Endothelial cell of umbilical vein (primary cell): ENCODE measurements at regions of chr5 and their contacts with region 1.

Region 1: DNA sequence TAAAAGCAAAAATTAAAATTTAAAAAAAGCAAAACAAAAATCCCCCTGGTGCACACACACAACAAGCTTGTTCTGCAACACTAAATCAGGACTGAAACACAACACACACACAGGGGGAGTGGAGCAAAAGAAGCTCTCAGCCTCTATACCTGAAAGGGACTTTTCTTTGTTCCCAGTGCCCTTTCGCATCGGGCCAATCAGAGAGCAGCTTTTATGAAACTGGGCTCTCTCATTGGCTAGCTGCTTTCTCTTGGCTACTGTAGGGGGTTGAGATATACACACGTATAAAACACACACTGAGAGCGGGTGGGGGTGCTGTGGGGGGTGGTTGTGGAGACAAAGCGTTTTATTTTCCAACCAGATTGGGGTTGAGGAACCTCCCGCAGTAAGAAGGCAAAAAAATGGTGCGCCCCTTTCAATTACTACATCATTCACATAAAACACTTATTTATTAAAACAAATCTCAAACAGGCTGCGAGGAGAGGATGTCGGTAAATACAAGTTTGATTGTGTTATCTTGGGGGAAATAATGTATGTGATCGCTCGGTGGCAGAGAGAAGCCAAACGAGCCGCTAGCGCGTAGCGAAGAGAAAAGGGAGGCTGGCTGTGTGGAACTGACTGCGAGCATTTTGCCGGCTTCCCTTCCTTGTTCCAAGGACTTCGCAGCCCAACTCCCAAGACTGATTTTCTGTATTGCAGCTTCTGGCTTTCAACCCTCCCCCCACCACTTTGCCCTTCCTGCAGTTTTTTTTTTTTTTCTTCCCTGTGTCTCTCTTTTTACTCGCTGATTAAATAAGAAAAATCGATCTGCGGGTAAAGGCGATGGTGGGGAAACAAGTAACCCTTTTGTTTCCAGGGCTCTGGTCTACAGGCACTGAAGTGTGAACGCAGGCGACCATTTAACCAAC is 2.5 kb upstream of the ZNF608 start:
- DNase-seq: peak; percentile 97
- H3K4me3 ChIP-seq: peak overlapping the region; percentile 65 to 89 (median 88)
- H3K27ac ChIP-seq: peak overlapping the region; percentile 98
- H3K4me1 ChIP-seq: peaks cover 20% of the 10 kb centered on the region
- H3K27me3 ChIP-seq: no peaks in the 10 kb centered on the region
- CTCF ChIP-seq: no peak
- POLR2A ChIP-seq: no peak

Region 2: DNA sequence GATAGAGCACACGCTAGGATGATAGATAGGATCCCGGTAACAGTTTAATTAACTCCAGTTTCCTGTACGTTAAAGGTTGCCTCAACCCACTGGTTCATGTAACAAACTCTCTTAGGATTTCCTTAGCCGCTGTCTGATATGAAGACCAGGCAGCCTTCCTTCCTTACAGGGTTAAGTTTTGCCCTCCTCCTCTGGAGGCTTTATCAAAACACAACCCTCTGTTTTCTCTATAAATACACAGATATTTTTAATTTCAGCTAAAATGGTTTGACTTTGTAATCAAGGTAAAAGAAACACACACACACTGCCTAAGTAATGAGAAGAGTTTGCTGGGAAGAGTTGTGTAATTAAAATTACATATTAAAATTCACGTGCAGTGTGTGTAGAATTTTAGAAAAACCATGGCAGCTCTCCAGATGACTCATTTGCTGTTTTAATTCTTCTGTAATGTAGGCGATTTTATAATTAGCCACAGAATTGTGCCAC is 867.1 kb before region 1 on chr5:
- CTCF ChIA-PET with region 1: no interaction called
- POLR2A ChIA-PET with region 1: no interaction called
- dilution Hi-C with region 1: no loop called
- intact Hi-C with region 1: loop called (anchors 2 kb)
- DNase-seq: peak; percentile 90
- H3K4me3 ChIP-seq: peak overlapping the region in 1 of 3 experiments; percentile 58
- H3K27ac ChIP-seq: peak overlapping the region; percentile 48
- H3K4me1 ChIP-seq: peaks cover 27% of the 10 kb centered on the region
- H3K27me3 ChIP-seq: peaks cover 3 to 7% of the 10 kb centered on the region in 2 experiments
- CTCF ChIP-seq: no peak
- POLR2A ChIP-seq: no peak

Region 3: DNA sequence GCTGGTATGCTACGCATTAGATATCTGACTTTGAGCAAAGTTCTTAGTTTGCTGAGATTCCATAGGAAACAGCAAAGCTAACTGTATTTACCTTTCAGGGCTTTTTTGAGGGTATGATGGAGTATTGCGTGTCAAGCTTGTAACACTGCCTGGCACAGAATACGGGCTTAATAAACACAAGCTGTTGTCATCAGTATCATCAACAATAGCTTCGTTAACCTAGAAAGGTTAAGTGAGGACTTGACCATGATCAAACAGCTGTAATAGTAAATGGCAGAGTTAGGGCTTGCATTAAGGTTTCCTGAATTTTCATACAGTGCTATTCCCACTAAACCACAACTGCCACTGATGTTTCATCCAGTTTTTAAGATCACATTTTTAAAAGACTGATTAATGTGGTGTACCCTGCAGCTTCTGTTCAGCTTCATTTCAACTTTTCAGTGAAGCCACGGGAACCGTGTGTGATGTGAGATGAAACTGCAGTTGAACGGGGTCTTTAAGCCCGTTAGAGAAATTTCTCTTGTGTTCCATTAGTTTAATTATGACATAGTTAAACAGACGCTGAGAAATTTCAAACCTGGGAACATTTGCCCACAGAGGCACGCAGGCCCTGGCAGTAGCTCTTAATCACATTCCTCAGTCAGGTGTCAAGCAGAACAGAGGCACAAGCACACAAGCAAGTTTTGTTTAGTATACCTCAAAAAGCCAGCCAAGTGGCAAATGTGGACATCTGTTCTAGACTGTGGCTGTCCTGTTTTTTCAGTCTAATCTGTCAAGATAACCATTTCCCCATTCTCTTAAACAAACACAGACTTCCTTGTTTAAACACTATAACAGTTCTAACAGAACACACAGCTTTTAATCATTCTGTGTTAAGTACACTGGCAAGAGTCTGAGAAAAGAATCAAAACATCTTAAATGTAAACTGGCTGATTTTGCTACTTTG is 149.6 kb before region 1 on chr5:
- CTCF ChIA-PET with region 1: interaction called, 10 read pairs
- POLR2A ChIA-PET with region 1: interaction called, 4 read pairs
- dilution Hi-C with region 1: no loop called
- intact Hi-C with region 1: loop called (anchors 1 kb)
- DNase-seq: peak; percentile 98
- H3K4me3 ChIP-seq: peak overlapping the region in 1 of 3 experiments; percentile 41
- H3K27ac ChIP-seq: peak overlapping the region; percentile 99
- H3K4me1 ChIP-seq: peaks cover 63% of the 10 kb centered on the region
- H3K27me3 ChIP-seq: no peaks in the 10 kb centered on the region
- CTCF ChIP-seq: no peak
- POLR2A ChIP-seq: peak; percentile 78

Region 4: DNA sequence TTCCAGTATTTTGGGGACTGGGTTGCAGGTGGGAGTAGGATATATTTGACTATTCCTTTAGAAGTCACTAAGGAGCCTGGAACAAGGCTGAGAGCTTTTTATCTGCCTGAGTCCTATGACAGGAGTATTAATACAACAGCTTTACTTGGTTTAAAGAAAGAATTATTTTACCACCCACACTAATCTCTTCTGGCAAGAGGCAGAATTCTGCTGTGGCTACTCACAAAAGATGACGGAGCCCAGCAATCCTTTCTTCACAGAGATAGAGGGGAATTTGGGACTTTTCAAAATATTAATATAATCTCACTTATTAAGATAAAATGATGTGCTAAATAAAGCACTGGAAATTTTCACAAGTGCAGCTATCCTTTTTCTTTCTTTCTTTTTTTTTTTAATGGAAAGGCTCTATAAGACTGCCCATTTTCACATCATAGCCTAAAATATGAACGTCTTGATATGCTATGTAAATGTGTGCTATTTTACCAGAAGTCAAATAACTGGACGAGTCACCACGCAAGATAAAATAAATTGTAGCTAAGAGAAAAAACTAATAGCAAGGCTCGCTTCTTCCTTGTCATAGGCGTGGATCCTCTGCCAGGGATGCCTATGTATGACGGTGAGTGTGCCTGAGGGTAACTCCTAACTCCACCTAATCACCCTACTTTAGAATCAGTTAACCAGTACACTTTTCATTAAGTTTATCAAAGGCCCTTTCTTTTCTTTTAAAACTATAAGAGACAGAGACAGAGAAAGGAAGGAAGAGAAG is 78.8 kb before region 1 on chr5:
- CTCF ChIA-PET with region 1: no interaction called
- POLR2A ChIA-PET with region 1: no interaction called
- dilution Hi-C with region 1: no loop called
- intact Hi-C with region 1: no loop called
- DNase-seq: no peak
- H3K4me3 ChIP-seq: no peak overlapping the region
- H3K27ac ChIP-seq: no peak overlapping the region
- H3K4me1 ChIP-seq: no peaks in the 10 kb centered on the region
- H3K27me3 ChIP-seq: no peaks in the 10 kb centered on the region
- CTCF ChIP-seq: no peak
- POLR2A ChIP-seq: no peak

Region 5: GRCh38 chr5:124888050-124888506 is 139.1 kb after region 1 on chr5:
- CTCF ChIA-PET with region 1: interaction called, 3 read pairs
- POLR2A ChIA-PET with region 1: interaction called, 3 read pairs
- dilution Hi-C with region 1: no loop called
- intact Hi-C with region 1: loop called (anchors 5 kb)
- DNase-seq: no peak
- H3K4me3 ChIP-seq: no peak overlapping the region
- H3K27ac ChIP-seq: no peak overlapping the region
- H3K4me1 ChIP-seq: peaks cover 15% of the 10 kb centered on the region
- H3K27me3 ChIP-seq: no peaks in the 10 kb centered on the region
- CTCF ChIP-seq: no peak
- POLR2A ChIP-seq: no peak

Region 6: GRCh38 chr5:125093776-125094175 is 344.8 kb after region 1 on chr5:
- CTCF ChIA-PET with region 1: interaction called, 3 read pairs
- POLR2A ChIA-PET with region 1: interaction called, 7 read pairs
- dilution Hi-C with region 1: no loop called
- intact Hi-C with region 1: loop called (anchors 2 kb)
- DNase-seq: peak; percentile 90
- H3K4me3 ChIP-seq: no peak overlapping the region
- H3K27ac ChIP-seq: peak overlapping the region; percentile 83
- H3K4me1 ChIP-seq: peaks cover 12% of the 10 kb centered on the region
- H3K27me3 ChIP-seq: no peaks in the 10 kb centered on the region
- CTCF ChIP-seq: no peak
- POLR2A ChIP-seq: no peak

Region 7: GRCh38 chr5:125412561-125413495 is 663.9 kb after region 1 on chr5:
- CTCF ChIA-PET with region 1: interaction called, 4 read pairs
- POLR2A ChIA-PET with region 1: interaction called, 14 read pairs
- dilution Hi-C with region 1: no loop called
- intact Hi-C with region 1: loop called (anchors 1 kb)
- DNase-seq: peak; percentile 93
- H3K4me3 ChIP-seq: no peak overlapping the region
- H3K27ac ChIP-seq: peak overlapping the region; percentile 99
- H3K4me1 ChIP-seq: peaks cover 54% of the 10 kb centered on the region
- H3K27me3 ChIP-seq: no peaks in the 10 kb centered on the region
- CTCF ChIP-seq: peak; percentile 58 to 66
- POLR2A ChIP-seq: no peak

Region 8: DNA sequence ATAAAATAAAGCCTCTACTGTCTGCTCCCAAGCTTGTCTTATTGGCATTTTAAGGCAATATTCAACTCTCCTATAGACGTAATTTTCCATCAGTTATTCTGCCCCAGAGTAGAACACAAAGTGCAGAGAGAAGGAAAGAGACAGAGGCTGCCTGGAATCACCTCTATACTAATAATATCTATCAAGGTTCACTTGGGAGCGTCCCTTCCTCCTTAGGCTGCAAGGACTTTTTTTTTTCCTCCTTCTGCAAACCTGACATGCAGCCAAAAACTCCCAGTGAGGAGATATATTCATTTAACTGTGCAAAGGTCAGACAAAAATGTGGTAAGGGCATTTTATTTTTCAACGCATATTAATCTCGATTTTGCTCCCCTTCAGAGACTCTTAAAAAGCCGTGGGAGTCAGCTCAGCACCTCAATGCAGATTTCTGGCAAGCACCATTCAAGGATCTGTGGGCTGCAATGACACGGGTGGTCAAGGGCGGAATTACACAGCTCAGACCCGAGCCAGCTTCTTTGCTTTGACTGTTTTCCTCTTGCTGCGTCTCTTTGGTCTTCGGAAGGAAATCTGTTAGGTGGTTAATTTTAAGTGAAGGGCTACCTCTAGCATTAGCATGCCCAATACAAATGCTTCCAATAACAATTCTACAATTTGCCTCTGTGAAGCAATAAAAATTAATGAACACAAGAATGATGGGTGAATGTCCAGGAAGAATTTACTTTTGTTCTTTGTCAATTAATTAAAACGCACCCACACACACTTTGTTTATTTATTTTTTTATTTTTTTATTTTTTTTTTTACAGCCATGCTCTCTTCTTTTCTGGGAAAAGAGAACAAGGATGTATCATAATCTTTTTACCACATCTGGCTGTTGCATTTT is 1086.6 kb after region 1 on chr5:
- CTCF ChIA-PET with region 1: interaction called, 8 read pairs
- POLR2A ChIA-PET with region 1: no interaction called
- dilution Hi-C with region 1: no loop called
- intact Hi-C with region 1: loop called (anchors 2 kb)
- DNase-seq: peak; percentile 68
- H3K4me3 ChIP-seq: no peak overlapping the region
- H3K27ac ChIP-seq: no peak overlapping the region
- H3K4me1 ChIP-seq: no peaks in the 10 kb centered on the region
- H3K27me3 ChIP-seq: no peaks in the 10 kb centered on the region
- CTCF ChIP-seq: peak; percentile 60 to 73
- POLR2A ChIP-seq: no peak